GM23248 (cell line): ENCODE measurements at regions of chr6 and their contacts with region 1.

Region 1: GRCh38 chr6:83884523-83884922 is 25.0 kb downstream of the CYB5R4 start:
- DNase-seq: peak; percentile 70
- H3K4me3 ChIP-seq: 0 out of 2 replicates have a peak overlapping the region, but pooled peaks have one; percentile 1
- H3K27ac ChIP-seq: no peak overlapping the region
- H3K4me1 ChIP-seq: 0 out of 2 replicates have a peak, but pooled peaks cover 3% of the 10 kb centered on the region
- H3K27me3 ChIP-seq: no peaks in the 10 kb centered on the region

Region 2: GRCh38 chr6:83192871-83193746 is 691.4 kb before region 1 on chr6 and contains the starts of genes PGM3 and RWDD2A:
- in situ Hi-C with region 1: no loop called
- DNase-seq: peak; percentile 97
- H3K4me3 ChIP-seq: peak within 1 kb of the TSS; percentile 88
- H3K27ac ChIP-seq: peak within 1 kb of the TSS; percentile 92
- H3K4me1 ChIP-seq: peaks cover 35% of the 10 kb centered on the region
- H3K27me3 ChIP-seq: no peaks in the 10 kb centered on the region
- total RNA-seq, gene PGM3: 74.4 and 89.0 TPM in 2 replicates
- total RNA-seq, gene RWDD2A: 4.4 and 6.1 TPM in 2 replicates

Region 3: DNA sequence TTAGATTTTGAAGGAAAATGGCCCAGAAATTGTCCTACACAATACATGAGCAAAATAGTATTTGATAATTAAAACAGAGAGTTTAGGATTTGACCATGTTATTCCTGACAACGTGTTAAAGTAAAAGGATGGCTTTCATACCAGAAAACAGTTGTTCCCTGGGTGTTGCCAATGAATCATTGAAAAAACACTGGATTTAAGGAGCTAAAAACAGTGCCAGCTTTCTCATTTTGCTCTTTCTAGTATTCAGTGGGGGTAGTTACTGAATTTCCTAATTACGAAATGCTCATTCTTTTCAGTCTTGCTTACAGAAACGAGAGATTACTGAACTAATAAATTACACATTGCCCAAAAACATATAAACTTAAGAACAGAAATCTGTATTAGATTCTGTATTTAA is 149.1 kb before region 1 on chr6:
- in situ Hi-C with region 1: no loop called
- DNase-seq: peak; percentile 7
- H3K4me3 ChIP-seq: no peak overlapping the region
- H3K27ac ChIP-seq: no peak overlapping the region
- H3K4me1 ChIP-seq: no peaks in the 10 kb centered on the region
- H3K27me3 ChIP-seq: no peaks in the 10 kb centered on the region

Region 4: DNA sequence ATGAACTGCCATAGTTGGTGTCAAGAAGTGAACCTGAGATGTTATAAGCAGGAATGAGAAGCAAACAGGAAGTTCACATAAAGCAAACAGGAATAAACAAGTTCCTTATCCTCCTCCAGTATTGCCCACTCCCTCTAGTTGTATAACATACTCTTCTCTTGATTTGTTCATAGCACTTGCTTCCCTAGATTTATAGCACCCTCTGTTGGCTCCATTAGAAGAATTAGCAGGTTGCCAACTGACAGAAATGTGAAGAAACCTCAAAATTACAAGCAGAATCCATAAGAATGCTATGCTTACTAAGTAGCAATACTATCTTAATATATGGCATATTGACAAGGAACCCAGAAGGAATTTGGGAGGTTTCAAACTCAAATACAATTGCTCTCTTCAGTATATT is 684.4 kb after region 1 on chr6:
- in situ Hi-C with region 1: loop called (anchors 25 kb)
- DNase-seq: peak; percentile 53
- H3K4me3 ChIP-seq: no peak overlapping the region
- H3K27ac ChIP-seq: no peak overlapping the region
- H3K4me1 ChIP-seq: no peaks in the 10 kb centered on the region
- H3K27me3 ChIP-seq: no peaks in the 10 kb centered on the region

Region 5: DNA sequence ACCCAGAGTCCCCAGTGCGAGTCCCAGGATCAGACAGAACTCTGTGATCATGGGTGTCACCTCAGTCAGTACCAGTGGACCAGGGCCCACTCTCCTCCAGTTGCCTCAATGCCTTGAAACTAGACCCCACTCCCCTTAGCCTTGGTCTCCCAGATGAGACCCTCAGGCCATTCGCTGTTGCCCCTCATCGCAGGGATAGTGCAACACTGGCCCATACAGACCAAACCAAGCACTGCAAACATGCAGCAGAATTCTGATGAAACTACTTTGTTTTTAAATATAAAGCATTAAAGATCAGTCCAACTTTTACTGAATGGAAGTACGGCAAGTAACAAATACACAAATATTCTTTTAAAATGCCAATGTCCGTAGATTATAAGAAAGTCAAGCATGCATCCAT is 1464.1 kb after region 1 on chr6:
- in situ Hi-C with region 1: loop called (anchors 25 kb)
- DNase-seq: no peak
- H3K4me3 ChIP-seq: no peak overlapping the region
- H3K27ac ChIP-seq: no peak overlapping the region
- H3K4me1 ChIP-seq: peaks cover 10% of the 10 kb centered on the region; the same call in 1 of the 2 replicates
- H3K27me3 ChIP-seq: no peaks in the 10 kb centered on the region